ENCODE measurements at regions of chr5 and their contacts with region 1.

Region 1: DNA sequence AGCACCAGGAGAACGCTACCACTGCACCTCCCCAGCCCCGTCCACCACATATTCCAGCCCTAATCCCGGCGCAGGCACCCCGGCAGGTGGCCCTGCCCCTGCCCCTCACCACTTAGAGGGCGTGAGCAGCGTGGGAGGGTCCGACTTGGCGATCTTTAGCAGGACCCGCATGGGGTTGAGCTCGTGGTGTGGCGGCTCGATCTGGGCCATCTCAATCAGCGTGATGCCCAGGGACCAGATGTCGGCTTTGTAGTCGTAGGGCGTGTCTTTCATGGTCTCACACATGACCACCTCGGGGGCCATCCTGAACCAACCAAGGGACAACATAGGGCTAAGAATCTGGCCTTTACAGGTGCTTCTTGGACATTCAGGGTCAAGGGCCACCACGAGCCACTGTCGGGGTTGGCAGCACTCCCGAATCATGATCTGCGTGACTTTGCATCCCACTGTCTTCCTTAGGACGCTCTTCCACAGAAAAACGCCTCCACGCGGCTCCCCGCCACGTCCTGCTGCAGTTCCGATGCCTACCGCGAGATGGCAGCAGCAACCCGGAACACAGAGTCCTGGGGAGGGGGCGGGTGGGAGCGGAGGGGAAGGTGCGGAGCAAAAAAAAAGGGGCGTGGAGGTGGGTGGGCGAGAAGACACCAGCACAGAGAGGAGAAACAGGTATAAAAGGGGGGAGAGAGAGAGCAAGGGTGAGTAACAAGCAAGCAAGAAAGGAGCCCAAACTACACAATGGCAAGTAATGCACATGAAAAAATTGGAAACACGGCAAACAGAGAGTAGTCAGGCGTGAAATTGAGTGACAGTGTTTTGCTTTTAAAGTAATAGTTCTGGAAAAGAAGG is 81.3 kb downstream of the STK10 start:
- DNase-seq: peak; percentile 43 to 85
- H3K4me3 ChIP-seq: peak overlapping the region; percentile 12
- H3K4me1 ChIP-seq: peaks cover 25% of the 10 kb centered on the region
- H3K27me3 ChIP-seq: no peaks in the 10 kb centered on the region

Region 2: DNA sequence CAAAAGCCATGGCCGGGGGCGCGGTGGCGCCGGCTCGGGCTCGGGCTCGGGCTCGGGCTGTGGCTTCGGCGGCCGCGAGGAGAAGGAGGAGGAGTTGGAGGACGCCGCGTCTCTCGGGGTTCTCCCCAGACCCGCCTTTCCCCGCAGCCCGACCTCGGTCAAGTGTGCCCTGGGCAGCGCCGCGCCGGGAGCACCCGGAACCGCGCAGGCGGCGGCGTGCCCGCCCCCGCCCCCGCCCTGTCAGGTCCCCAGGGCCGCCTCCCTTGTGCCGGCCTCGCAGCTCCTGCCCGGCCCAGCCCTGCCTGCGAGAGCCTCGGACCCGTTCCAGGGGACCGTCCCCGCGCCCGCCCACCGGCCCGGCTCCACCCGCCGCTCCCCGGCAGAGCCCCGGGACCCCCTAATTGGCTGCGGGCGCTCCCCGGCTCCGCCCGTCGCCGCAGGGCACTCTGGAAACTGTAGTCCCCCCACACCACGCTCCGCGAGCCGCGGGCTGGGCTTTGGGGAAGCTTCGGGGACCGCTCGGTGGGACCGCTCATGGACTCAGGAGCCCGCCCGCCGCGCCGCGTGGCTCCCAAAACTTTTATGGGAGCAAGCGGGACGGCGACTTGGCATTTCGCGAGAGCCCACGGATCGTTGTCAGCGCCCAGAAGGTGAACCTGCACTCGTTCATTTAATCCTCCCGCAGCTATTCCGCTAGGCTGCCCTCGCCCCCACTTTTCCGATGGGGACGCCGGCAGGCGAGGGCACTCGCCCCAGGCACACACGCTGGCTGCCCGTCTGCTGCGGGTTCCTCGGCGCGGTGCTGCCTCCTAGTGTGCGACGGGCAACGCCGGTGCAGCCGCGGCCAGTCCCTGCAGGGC is 81.5 kb after region 1 on chr5 and contains the start of gene STK10:
- in situ Hi-C with region 1: loop called (anchors 5 kb)
- DNase-seq: peak; percentile 86 to 95
- H3K4me3 ChIP-seq: peak within 1 kb of the TSS; percentile 90
- H3K4me1 ChIP-seq: peaks cover 14% of the 10 kb centered on the region
- H3K27me3 ChIP-seq: no peaks in the 10 kb centered on the region

Region 3: GRCh38 chr5:172283020-172283861 is 176.5 kb after region 1 on chr5 and contains the start of gene UBTD2:
- in situ Hi-C with region 1: loop called (anchors 10 kb)
- DNase-seq: peak; percentile 72 to 89
- H3K4me3 ChIP-seq: peak within 1 kb of the TSS; percentile 89
- H3K4me1 ChIP-seq: peaks cover 20% of the 10 kb centered on the region
- H3K27me3 ChIP-seq: no peaks in the 10 kb centered on the region

Region 4: GRCh38 chr5:172299916-172300439 is 193.2 kb after region 1 on chr5:
- in situ Hi-C with region 1: no loop called
- DNase-seq: no peak
- H3K4me3 ChIP-seq: no peak overlapping the region
- H3K4me1 ChIP-seq: peaks cover 11% of the 10 kb centered on the region
- H3K27me3 ChIP-seq: no peaks in the 10 kb centered on the region

Region 5: GRCh38 chr5:172697123-172698121 is 590.7 kb after region 1 on chr5:
- in situ Hi-C with region 1: loop called (anchors 25 kb)
- DNase-seq: peak; percentile 78 to 92
- H3K4me3 ChIP-seq: peak overlapping the region; percentile 27
- H3K4me1 ChIP-seq: peaks cover 8% of the 10 kb centered on the region
- H3K27me3 ChIP-seq: no peaks in the 10 kb centered on the region

Measured in HAP-1 (cell line).